CD4-positive, alpha-beta T cell (primary cell): ENCODE measurements at regions of chr14 and their contacts with region 1.

Region 1: GRCh38 chr14:32076278-32077080 is 625 bp upstream of the ARHGAP5 start:
- DNase-seq: peak; percentile 59 to 91 (median 73)
- ATAC-seq: peak; percentile 55
- H3K4me3 ChIP-seq: peak overlapping the region; percentile 92
- H3K4me3 Mint-ChIP-seq: peak overlapping the region; percentile 96
- H3K27ac ChIP-seq: peak overlapping the region; percentile 57 to 75
- H3K27ac Mint-ChIP-seq: peak overlapping the region; percentile 89
- H3K4me1 ChIP-seq: peaks cover 6% of the 10 kb centered on the region
- H3K4me1 Mint-ChIP-seq: peaks cover 44% of the 10 kb centered on the region
- H3K27me3 ChIP-seq: no peaks in the 10 kb centered on the region
- H3K27me3 Mint-ChIP-seq: no peaks in the 10 kb centered on the region
- CTCF ChIP-seq: no peak

Region 2: DNA sequence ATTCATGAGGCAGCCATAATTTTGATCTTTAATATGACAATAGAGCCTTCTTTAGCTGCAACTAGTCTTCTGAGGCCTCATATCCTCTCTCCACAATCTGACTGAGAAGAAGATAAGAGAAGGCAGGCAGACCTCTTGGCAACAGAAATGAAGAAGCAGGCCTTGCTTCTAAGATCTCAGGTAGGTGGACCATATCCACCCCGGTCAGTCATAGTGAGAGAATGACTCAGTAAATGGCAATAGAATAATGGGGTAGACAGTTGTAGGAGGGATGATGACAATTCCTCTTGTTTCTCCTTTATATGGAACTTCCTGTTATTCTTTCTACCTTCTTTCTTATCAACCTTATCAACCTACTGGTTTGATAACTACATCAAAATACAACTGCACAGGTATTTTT is 1764.3 kb before region 1 on chr14:
- CTCF ChIA-PET with region 1: no interaction called
- POLR2A ChIA-PET with region 1: no interaction called
- intact Hi-C with region 1: no loop called
- DNase-seq: no peak
- ATAC-seq: no peak
- H3K4me3 ChIP-seq: no peak overlapping the region
- H3K4me3 Mint-ChIP-seq: no peak overlapping the region
- H3K27ac ChIP-seq: no peak overlapping the region
- H3K27ac Mint-ChIP-seq: no peak overlapping the region
- H3K4me1 ChIP-seq: no peaks in the 10 kb centered on the region
- H3K4me1 Mint-ChIP-seq: no peaks in the 10 kb centered on the region
- H3K27me3 ChIP-seq: peaks cover 0 to 3% of the 10 kb centered on the region in 2 experiments
- H3K27me3 Mint-ChIP-seq: peaks cover 5% of the 10 kb centered on the region
- CTCF ChIP-seq: no peak

Region 3: GRCh38 chr14:31456841-31457664 is 619.4 kb before region 1 on chr14 and contains the start of gene DTD2:
- CTCF ChIA-PET with region 1: no interaction called
- POLR2A ChIA-PET with region 1: no interaction called
- intact Hi-C with region 1: loop called (anchors 2 to 5 kb)
- DNase-seq: peak; percentile 85 to 96 (median 91)
- ATAC-seq: peak; percentile 97
- H3K4me3 ChIP-seq: peak within 1 kb of the TSS; percentile 95
- H3K4me3 Mint-ChIP-seq: peak within 1 kb of the TSS; percentile 93
- H3K27ac ChIP-seq: peak within 1 kb of the TSS; percentile 39 to 71
- H3K27ac Mint-ChIP-seq: peak within 1 kb of the TSS; percentile 94
- H3K4me1 ChIP-seq: peaks cover 9% of the 10 kb centered on the region
- H3K4me1 Mint-ChIP-seq: peaks cover 35% of the 10 kb centered on the region
- H3K27me3 ChIP-seq: no peaks in the 10 kb centered on the region
- H3K27me3 Mint-ChIP-seq: no peaks in the 10 kb centered on the region
- CTCF ChIP-seq: no peak
- total RNA-seq, gene DTD2: 4.6 to 5.7 TPM

Region 4: DNA sequence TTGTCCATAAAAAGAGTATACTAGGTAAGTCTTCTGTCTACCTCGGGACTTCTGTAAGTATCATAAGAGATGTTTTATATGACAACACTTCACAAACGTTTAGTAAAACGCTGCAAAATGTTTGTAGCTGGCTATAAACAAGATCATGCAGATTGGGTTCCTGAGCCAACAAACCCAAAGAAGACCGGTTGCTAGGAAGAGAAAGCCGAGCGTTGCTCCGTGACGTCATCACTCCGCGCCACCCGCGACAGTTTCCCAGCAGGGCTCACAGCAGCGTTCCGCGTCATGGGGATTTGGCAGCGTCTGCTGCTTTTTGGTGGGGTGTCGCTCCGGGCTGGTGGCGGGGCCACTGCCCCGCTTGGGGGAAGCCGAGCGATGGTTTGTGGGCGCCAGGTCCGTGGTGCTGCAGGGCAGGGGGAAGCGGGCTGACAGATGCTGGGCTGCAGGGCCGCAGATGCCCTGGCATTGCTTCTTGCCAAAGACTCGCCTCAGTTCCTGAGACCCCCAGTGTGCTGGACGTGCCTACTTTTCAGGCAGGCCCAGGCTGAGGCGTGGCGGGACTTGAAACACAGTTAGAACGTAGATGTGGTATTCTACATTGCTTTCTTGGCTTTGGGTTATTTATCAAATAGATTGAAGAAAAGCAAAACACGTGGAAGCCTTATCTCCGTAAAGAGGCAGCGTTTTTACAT is 515.2 kb before region 1 on chr14 and contains the start of gene NUBPL:
- CTCF ChIA-PET with region 1: no interaction called
- POLR2A ChIA-PET with region 1: no interaction called
- intact Hi-C with region 1: loop called (anchors 1 to 5 kb)
- DNase-seq: peak; percentile 94 to 99 (median 97)
- ATAC-seq: peak; percentile 91
- H3K4me3 ChIP-seq: peak within 1 kb of the TSS; percentile 84
- H3K4me3 Mint-ChIP-seq: peak within 1 kb of the TSS; percentile 95
- H3K27ac ChIP-seq: peak within 1 kb of the TSS; percentile 80 to 84
- H3K27ac Mint-ChIP-seq: peak within 1 kb of the TSS; percentile 98
- H3K4me1 ChIP-seq: no peaks in the 10 kb centered on the region
- H3K4me1 Mint-ChIP-seq: peaks cover 34% of the 10 kb centered on the region
- H3K27me3 ChIP-seq: no peaks in the 10 kb centered on the region
- H3K27me3 Mint-ChIP-seq: peaks cover 26% of the 10 kb centered on the region
- CTCF ChIP-seq: no peak
- total RNA-seq, gene NUBPL: 7.2 to 8.2 TPM

Region 5: GRCh38 chr14:31834616-31835015 is 241.9 kb before region 1 on chr14:
- CTCF ChIA-PET with region 1: no interaction called
- POLR2A ChIA-PET with region 1: no interaction called
- intact Hi-C with region 1: no loop called
- DNase-seq: no peak
- ATAC-seq: no peak
- H3K4me3 ChIP-seq: no peak overlapping the region
- H3K4me3 Mint-ChIP-seq: no peak overlapping the region
- H3K27ac ChIP-seq: no peak overlapping the region
- H3K27ac Mint-ChIP-seq: no peak overlapping the region
- H3K4me1 ChIP-seq: no peaks in the 10 kb centered on the region
- H3K4me1 Mint-ChIP-seq: no peaks in the 10 kb centered on the region
- H3K27me3 ChIP-seq: no peaks in the 10 kb centered on the region
- H3K27me3 Mint-ChIP-seq: no peaks in the 10 kb centered on the region
- CTCF ChIP-seq: no peak

Region 6: DNA sequence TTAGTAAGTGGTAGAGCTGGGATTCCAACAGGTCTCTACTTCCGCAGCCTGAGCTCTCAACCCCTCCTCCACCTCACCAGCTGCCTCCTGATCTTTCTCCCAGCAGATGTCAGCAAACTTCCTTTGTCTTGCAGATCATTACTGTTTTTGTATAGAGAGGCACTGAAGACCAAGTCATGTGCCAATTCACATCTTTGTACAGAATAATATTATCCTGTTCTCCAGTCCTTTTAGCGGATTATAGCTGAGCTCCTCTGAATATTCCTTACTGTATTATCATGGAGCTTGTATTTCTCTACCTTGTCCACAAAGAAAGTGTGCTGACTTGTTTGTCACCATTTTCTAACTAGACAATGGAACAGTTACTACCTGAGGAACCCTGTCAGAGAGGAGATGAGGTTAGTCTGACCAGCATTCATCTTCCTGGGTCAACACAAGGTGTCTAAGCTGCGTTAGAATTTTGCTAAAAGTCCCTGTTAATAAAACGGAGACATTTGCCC is 141.7 kb before region 1 on chr14:
- CTCF ChIA-PET with region 1: no interaction called
- POLR2A ChIA-PET with region 1: interaction called, 3 read pairs
- intact Hi-C with region 1: loop called in 1 of 2 experiments (anchors 2 kb)
- DNase-seq: peak in 5 of 14 experiments; percentile 6 to 57 (median 45)
- ATAC-seq: peak; percentile 45
- H3K4me3 ChIP-seq: no peak overlapping the region
- H3K4me3 Mint-ChIP-seq: no peak overlapping the region
- H3K27ac ChIP-seq: no peak overlapping the region
- H3K27ac Mint-ChIP-seq: no peak overlapping the region
- H3K4me1 ChIP-seq: peaks cover 3% of the 10 kb centered on the region
- H3K4me1 Mint-ChIP-seq: peaks cover 9% of the 10 kb centered on the region
- H3K27me3 ChIP-seq: no peaks in the 10 kb centered on the region
- H3K27me3 Mint-ChIP-seq: no peaks in the 10 kb centered on the region
- CTCF ChIP-seq: no peak

Region 7: DNA sequence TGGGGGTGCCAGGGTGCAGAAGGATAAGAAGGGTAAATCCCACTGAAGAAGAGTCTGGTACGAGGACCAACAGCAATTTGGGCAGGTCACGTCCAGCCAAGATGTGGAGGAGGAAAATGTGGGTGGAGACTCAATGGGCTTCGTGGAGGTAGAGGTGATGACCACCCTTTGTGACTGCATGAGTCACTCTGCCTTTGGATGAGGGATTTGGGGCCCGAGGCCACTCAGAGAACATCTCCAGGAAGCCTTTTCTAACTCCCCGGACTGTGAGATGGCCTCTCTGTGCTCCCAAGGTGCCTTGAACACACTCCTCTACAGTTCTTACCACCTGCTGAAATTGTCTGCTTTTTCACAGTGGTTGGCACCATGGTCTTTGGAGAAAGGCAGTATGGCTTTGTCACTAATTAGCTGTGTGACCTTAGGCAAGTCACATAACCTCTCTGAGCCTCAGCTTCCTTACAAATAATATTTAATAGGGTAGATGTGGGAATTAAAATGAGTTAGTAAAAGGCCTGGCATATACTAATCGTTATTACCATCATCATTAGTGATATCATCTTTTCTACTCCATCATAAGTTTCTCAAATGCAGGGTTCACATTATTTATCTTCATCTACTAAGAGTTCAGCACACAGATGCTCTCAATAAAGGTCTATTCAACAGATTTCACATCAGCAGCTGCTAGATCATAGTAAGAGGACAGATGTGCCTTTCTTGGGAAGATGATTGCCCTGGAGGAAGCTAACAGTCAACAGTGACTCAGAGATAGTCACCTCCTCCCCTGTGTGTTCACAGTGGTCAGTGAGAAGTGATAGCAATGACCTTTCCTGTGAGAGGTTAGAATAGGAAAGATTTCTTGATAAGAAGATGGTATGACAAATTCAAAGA is 66.3 kb before region 1 on chr14:
- CTCF ChIA-PET with region 1: no interaction called
- POLR2A ChIA-PET with region 1: no interaction called
- intact Hi-C with region 1: no loop called
- DNase-seq: no peak
- ATAC-seq: no peak
- H3K4me3 ChIP-seq: no peak overlapping the region
- H3K4me3 Mint-ChIP-seq: no peak overlapping the region
- H3K27ac ChIP-seq: no peak overlapping the region
- H3K27ac Mint-ChIP-seq: no peak overlapping the region
- H3K4me1 ChIP-seq: no peaks in the 10 kb centered on the region
- H3K4me1 Mint-ChIP-seq: no peaks in the 10 kb centered on the region
- H3K27me3 ChIP-seq: no peaks in the 10 kb centered on the region
- H3K27me3 Mint-ChIP-seq: peaks cover 5% of the 10 kb centered on the region
- CTCF ChIP-seq: no peak

Region 8: DNA sequence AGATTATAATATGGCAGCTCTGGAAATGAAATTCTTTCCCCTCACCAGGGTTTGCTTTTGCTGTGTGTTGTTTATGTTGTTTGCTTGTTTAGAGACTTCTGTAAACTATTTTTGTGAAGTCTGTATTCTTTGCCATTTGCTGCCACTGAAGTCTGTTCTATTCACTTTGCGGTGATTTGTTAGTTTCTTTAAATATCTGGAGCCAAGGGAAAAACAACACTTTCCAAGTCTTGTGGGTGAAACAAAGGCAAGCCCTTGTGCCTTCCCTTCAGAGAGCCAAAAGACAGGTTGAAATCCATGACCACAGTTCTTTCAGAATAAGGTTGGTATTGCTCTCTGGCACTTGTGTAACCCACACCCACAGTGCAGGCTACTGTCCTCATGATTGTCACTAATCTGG is 65.9 kb after region 1 on chr14:
- CTCF ChIA-PET with region 1: no interaction called
- POLR2A ChIA-PET with region 1: no interaction called
- intact Hi-C with region 1: loop called in 1 of 2 experiments (anchors 5 kb)
- DNase-seq: no peak
- ATAC-seq: no peak
- H3K4me3 ChIP-seq: no peak overlapping the region
- H3K4me3 Mint-ChIP-seq: no peak overlapping the region
- H3K27ac ChIP-seq: no peak overlapping the region
- H3K27ac Mint-ChIP-seq: no peak overlapping the region
- H3K4me1 ChIP-seq: no peaks in the 10 kb centered on the region
- H3K4me1 Mint-ChIP-seq: peaks cover 7% of the 10 kb centered on the region
- H3K27me3 ChIP-seq: no peaks in the 10 kb centered on the region
- H3K27me3 Mint-ChIP-seq: no peaks in the 10 kb centered on the region
- CTCF ChIP-seq: no peak

Region 9: DNA sequence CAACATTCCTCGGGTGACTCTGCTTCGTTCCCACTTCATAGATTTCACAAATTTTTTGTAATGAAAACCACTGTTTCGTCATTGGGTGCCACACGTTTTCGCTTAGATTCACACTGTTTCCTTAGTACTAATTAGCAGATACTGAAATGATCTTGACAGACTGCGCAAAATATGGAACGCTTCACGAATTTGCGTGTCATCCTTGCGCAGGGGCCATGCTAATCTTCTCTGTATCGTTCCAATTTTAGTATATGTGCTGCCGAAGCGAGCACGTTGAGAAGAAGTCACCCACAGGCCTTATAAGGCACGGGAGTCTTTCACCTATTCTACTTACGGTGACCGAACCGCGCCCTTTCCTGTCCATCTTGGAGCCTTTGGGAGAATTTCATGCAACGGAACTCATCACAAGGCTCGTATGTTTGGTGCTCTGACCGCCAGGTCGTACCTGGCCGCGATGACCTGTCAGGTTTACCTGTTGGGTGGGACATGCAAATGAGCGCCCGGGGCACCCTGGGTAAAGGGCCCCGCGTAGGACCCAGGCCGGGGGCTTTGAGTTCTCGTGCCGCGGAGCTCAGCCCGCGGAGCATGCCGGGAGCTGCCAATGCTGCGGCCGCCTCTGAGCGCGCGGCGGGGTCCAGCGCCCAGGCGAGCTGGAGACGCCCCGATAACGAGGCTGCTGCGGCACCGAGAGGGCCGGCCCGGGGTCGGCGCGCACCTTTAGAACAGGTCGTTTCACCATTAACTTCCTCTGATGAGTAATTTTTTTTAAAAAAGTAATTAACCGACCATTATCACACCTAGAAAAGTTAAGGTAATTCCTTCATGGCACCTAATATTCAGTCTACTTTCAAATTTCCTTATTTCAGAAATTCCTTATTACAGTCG is 126.8 kb after region 1 on chr14 and contains the start of gene RNU6-8:
- CTCF ChIA-PET with region 1: interaction called, 6 read pairs
- POLR2A ChIA-PET with region 1: interaction called, 54 read pairs
- intact Hi-C with region 1: loop called (anchors 1 kb)
- DNase-seq: peak; percentile 78 to 94 (median 86)
- ATAC-seq: peak; percentile 81
- H3K4me3 ChIP-seq: peak within 1 kb of the TSS; percentile 85
- H3K4me3 Mint-ChIP-seq: peak within 1 kb of the TSS; percentile 93
- H3K27ac ChIP-seq: peak within 1 kb of the TSS; percentile 90 to 98
- H3K27ac Mint-ChIP-seq: peak within 1 kb of the TSS; percentile 100
- H3K4me1 ChIP-seq: peaks cover 26% of the 10 kb centered on the region
- H3K4me1 Mint-ChIP-seq: peaks cover 30% of the 10 kb centered on the region
- H3K27me3 ChIP-seq: no peaks in the 10 kb centered on the region
- H3K27me3 Mint-ChIP-seq: peaks cover 12% of the 10 kb centered on the region
- CTCF ChIP-seq: no peak
- total RNA-seq, gene RNU6-8: not detected